ENCODE measurements at regions of chr22 and their contacts with region 1.

Region 1: DNA sequence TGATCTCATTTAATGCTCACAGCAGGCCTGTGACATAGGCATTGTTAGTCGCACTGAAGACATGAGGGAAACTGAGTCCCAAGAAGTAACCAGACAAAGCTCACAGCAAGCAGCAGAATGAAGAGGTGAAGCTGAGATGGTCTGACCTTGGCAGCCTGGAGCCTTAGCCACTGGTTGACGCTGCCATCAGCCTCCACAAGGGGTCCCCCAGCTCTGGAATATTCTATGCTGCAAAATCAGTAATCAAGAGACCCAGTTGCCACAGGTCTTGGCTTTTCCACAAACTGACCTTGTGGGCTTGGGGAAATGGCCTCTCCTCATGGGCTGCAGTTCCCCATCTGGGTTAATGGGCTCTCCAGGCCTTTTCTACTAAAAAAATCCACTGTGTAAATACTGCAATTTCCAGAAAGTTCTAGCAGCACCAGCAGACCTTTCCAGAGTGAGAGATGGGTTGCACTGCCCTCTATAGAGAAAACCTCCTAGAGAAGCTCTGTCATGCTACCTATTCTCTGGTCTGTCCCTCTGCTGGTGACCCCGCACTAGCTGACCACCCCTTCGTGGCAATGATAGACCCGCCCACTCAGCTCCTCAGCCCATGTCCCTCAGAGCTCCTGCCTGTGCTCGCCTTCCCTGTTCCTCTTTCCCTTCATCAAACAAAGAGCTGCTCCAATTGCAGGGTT is 22.6 kb upstream of the ISX start:
- DNase-seq: no peak
- ATAC-seq: no peak
- H3K4me3 ChIP-seq: no peak overlapping the region
- H3K27ac ChIP-seq: no peak overlapping the region
- H3K4me1 ChIP-seq: no peaks in the 10 kb centered on the region
- H3K27me3 ChIP-seq: peaks cover 0 to 47% (median 6%) of the 10 kb centered on the region in 9 donors
- CTCF ChIP-seq: no peak
- POLR2A ChIP-seq: no peak

Region 2: DNA sequence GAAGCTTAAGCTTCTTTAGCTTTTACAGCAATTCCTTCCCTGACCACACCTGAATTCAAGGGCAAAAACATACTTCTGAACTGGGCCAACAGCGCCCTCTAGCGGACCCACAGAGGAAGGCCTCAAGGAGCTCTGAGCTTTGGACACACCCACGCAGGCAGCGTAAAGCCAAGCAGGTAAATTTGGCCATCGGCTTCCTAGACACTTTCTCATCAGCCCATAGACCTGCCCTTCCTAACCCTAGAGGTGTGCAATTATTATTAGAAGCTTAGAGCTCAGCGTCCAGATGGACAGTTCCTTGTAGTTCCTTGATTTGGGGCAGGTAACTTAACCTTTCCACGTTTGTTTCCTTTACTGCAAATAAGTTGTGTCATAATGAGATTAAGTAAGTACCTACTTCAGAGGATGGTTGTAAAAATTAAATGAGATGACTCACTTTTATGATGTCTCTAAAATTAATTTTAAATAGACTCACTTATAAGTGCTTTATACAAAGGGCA is 188.2 kb after region 1 on chr22:
- intact Hi-C with region 1: loop called in 1 of 10 experiments (anchors 5 kb)
- DNase-seq: peak in 3 of 5 donors; percentile 25 to 38 (median 32)
- ATAC-seq: peak in 2 of 4 donors; percentile 64 to 66
- H3K4me3 ChIP-seq: no peak overlapping the region
- H3K27ac ChIP-seq: no peak overlapping the region
- H3K4me1 ChIP-seq: peaks cover 0 to 4% (median 0%) of the 10 kb centered on the region in 12 donors
- H3K27me3 ChIP-seq: peaks cover 0 to 27% (median 6%) of the 10 kb centered on the region in 9 donors
- CTCF ChIP-seq: peak; percentile 62 to 86 (median 73)
- POLR2A ChIP-seq: no peak